Activated CD4-positive, alpha-beta memory T cell treated with anti-CD3 and anti-CD28 coated beads for 36 hours (primary cell): ENCODE measurements at regions of chrX and their contacts with region 1.

Region 1: GRCh38 chrX:65859299-65859698 is 180.6 kb downstream of the VSIG4 start:
- DNase-seq: no peak
- H3K4me3 Mint-ChIP-seq: no peak overlapping the region
- H3K27ac Mint-ChIP-seq: peak overlapping the region; percentile 23
- H3K4me1 Mint-ChIP-seq: peaks cover 43% of the 10 kb centered on the region
- H3K27me3 Mint-ChIP-seq: no peaks in the 10 kb centered on the region

Region 2: DNA sequence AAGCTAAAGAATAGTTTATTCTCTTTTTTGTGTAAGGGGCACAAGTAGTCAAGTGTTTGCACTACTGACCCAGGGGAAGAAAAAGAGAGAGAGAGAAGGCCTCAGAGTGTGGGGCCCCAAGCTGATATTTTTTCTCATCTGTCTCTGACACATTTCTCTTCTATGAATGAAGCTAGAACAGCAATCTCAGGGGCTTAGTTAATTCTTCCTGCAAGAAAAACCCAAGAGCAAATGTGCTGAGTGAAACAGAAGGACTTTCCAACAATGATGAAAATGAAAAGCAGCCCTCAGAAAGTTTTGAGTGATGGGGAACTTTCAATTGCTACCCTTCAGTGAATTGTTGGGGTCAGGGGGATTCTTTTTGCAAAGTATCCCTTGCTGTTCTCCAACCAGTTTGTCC is 201.1 kb before region 1 on chrX:
- CTCF ChIA-PET with region 1: no interaction called
- POLR2A ChIA-PET with region 1: no interaction called
- intact Hi-C with region 1: no loop called
- DNase-seq: no peak
- H3K4me3 Mint-ChIP-seq: no peak overlapping the region
- H3K27ac Mint-ChIP-seq: peak overlapping the region; percentile 69
- H3K4me1 Mint-ChIP-seq: peaks cover 34% of the 10 kb centered on the region
- H3K27me3 Mint-ChIP-seq: no peaks in the 10 kb centered on the region

Region 3: DNA sequence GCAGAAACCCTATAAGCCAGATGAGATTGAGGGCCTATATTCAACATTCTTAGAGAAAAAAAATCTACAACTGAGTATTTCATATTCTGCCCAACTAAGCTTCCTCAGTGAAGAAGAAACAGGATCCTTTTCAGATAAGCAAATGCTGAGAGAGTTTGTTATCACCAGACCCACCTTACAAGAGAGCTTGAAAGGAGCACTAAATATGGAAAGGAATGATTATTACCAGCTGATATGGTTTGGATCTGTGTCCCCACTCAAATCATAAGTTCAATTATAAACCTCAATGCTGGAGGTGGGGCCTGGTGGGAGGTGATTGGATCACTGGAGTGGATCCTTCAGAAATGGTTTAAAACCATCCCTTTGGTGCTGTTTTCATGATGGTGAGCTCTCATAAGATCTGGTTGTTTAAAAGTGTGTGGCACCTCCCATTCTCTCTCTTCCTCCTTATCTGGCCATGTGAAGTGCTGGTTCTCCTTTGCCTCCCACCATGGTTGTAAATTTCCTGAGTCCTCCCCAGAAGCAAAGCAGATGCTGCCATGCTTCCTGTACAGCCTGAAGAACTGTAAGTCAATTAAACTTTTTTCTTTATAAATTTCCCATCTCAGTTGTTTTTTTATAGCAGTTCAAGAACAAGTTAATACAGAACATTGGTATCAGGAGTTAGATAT is 47.6 kb before region 1 on chrX:
- CTCF ChIA-PET with region 1: no interaction called
- POLR2A ChIA-PET with region 1: no interaction called
- intact Hi-C with region 1: no loop called
- DNase-seq: no peak
- H3K4me3 Mint-ChIP-seq: no peak overlapping the region
- H3K27ac Mint-ChIP-seq: no peak overlapping the region
- H3K4me1 Mint-ChIP-seq: no peaks in the 10 kb centered on the region
- H3K27me3 Mint-ChIP-seq: no peaks in the 10 kb centered on the region

Region 4: DNA sequence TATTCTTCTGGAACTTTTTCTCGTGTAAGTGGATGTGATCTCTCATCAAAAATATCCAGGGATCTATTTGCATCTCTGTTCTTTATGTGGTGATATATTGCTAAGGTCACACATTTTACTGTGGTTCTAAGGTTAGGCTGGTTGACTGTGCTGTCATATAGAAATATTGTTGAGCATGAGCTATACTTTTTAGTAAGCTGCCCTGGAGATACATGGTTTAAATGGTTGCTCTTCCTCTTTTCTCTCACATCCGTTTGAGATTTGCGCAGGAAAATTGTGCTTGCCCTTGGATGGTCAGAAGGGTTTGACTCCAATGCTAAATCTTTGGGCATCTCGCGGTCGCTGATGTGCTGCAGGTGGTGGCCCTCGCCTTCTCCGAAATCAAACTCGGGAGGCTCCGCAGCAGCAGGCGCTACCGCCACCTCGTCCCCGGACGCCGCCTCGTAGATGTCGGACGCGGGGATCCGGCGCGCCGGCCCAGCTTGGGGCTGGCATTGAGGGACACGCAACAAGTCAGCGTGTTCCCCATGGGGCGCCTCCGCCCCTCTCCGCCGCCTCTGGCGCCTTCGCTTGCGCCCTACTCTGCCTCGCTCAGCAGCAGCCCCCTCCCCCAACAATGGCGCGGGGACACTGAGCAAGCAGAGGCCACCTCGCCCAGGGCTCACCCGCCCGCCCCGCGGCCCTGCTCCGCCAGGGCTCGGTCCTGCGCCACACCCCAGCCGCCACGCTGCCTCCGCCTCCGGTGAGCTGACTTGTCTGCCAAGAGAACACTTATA is 37.4 kb before region 1 on chrX:
- CTCF ChIA-PET with region 1: no interaction called
- POLR2A ChIA-PET with region 1: no interaction called
- intact Hi-C with region 1: loop called (anchors 5 kb)
- DNase-seq: peak; percentile 50
- H3K4me3 Mint-ChIP-seq: peak overlapping the region; percentile 58
- H3K27ac Mint-ChIP-seq: no peak overlapping the region
- H3K4me1 Mint-ChIP-seq: peaks cover 10% of the 10 kb centered on the region
- H3K27me3 Mint-ChIP-seq: peaks cover 2% of the 10 kb centered on the region

Region 5: GRCh38 chrX:65841263-65841662 is 18.0 kb before region 1 on chrX:
- CTCF ChIA-PET with region 1: no interaction called
- POLR2A ChIA-PET with region 1: no interaction called
- intact Hi-C with region 1: no loop called
- DNase-seq: no peak
- H3K4me3 Mint-ChIP-seq: no peak overlapping the region
- H3K27ac Mint-ChIP-seq: no peak overlapping the region
- H3K4me1 Mint-ChIP-seq: peaks cover 2% of the 10 kb centered on the region
- H3K27me3 Mint-ChIP-seq: no peaks in the 10 kb centered on the region

Region 6: GRCh38 chrX:66150163-66150562 is 290.9 kb after region 1 on chrX:
- CTCF ChIA-PET with region 1: no interaction called
- POLR2A ChIA-PET with region 1: no interaction called
- intact Hi-C with region 1: no loop called
- DNase-seq: no peak
- H3K4me3 Mint-ChIP-seq: no peak overlapping the region
- H3K27ac Mint-ChIP-seq: no peak overlapping the region
- H3K4me1 Mint-ChIP-seq: no peaks in the 10 kb centered on the region
- H3K27me3 Mint-ChIP-seq: no peaks in the 10 kb centered on the region